Adrenal gland (tissue), 19 donors: ENCODE measurements at regions of chr21 and their contacts with region 1.

Region 1: DNA sequence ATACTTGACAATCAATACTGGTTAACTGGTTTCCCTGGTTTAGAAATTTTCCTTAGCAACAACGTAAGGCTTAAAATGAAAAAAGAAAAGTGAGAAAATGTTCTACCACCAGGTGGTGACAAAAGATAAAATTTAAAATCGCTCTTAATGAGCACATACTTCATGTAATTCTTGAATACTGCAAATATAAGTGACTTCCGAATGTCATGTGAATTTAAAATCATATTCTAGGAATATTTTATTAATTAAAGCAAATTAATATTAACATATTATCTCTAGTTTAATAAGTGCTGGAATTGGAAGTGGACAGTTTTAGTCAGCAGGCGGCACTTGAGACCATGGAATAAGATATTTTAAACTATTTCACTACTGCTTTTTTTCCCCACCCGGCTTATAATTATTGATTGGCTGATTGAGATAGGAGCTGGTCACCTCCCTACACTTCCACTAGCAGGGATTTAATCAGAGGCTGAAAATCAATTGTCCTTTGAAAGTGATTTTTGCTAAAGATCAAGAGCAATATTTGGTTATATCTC is 5.0 kb upstream of the ADAMTS1 start:
- DNase-seq: no peak
- H3K4me3 ChIP-seq: no peak overlapping the region
- H3K27ac ChIP-seq: no peak overlapping the region
- H3K4me1 ChIP-seq: peaks cover 4 to 8% of the 10 kb centered on the region in 2 donors
- H3K27me3 ChIP-seq: peaks cover 4% of the 10 kb centered on the region
- CTCF ChIP-seq: peak; percentile 42 to 95 (median 62)
- POLR2A ChIP-seq: no peak

Region 2: DNA sequence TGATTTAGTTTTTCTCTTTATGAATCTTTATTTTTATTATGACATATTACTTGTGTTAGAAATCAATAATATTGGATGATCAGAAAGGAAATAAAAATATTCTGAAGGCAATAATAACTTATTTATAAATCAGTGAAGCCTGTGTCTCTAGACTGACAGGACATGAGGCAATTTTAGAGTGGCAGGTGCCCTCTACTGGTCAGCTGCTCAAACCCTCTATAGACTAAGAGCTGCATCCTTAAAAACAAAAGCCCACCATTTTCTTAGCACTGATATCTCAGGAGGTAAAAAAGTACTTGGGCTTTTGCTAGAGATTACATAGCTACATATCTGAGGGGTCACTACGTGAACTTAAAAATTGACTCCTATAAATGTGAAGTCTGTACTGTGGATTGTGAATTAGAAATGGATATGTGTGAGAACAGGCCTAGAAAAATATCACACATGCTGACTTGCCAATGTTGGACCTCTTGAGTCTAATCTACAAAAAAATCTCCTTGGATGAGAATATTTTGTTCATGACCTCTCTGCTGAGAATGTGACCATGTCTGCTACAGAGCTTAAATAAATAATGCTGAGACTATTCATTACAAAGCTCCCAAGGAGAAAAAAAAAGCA is 714.6 kb after region 1 on chr21:
- intact Hi-C with region 1: loop called in 1 of 2 experiments (anchors 5 kb)
- DNase-seq: peak; percentile 17 to 80 (median 42)
- H3K4me3 ChIP-seq: no peak overlapping the region
- H3K27ac ChIP-seq: no peak overlapping the region
- H3K4me1 ChIP-seq: no peaks in the 10 kb centered on the region
- H3K27me3 ChIP-seq: no peaks in the 10 kb centered on the region
- CTCF ChIP-seq: peak; percentile 28 to 64 (median 54)
- POLR2A ChIP-seq: no peak

Region 3: DNA sequence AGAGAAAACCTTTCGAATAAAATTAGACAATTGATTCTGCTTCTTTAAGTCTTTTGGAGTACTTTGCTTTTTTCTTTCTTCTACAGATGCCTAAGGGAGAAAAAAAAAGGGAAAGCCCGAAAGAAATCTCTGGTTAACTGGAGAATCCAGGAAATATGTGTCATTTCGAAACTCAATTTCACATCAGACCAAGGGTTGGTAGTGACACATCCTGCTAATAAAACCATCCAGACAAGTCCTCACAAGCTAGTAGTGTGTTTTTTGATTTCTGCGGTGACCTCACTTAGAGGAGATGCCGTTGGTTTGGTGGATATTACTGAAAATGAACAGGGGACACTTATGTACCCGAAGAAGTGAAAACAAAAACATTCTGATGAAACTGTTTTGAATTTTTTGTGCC is 843.2 kb after region 1 on chr21:
- intact Hi-C with region 1: loop called in 1 of 2 experiments (anchors 10 kb)
- DNase-seq: no peak
- H3K4me3 ChIP-seq: no peak overlapping the region
- H3K27ac ChIP-seq: no peak overlapping the region
- H3K4me1 ChIP-seq: no peaks in the 10 kb centered on the region
- H3K27me3 ChIP-seq: no peaks in the 10 kb centered on the region
- CTCF ChIP-seq: no peak
- POLR2A ChIP-seq: no peak

Region 4: DNA sequence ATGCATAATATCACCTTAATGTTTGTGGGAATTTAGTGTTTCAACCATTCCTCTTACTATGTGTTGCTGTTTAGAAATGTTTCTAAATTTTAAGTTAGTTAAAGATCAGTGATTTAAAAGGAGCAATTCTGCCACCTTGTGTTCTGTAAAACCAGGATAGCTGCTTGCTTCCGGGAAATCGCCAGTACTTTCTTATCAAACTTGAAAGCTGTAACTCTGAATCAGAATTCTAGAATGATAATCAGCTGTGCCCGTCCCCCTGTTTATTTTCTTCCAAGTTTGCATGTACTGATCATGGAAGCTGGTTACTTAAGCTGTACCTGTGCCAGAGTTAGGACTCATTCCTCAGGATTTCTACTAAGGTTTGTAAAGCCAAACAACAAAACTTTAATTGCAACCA is 1486.1 kb after region 1 on chr21:
- intact Hi-C with region 1: loop called in 1 of 2 experiments (anchors 10 kb)
- DNase-seq: peak in 3 of 7 donors; percentile 3 to 22 (median 16)
- H3K4me3 ChIP-seq: no peak overlapping the region
- H3K27ac ChIP-seq: no peak overlapping the region
- H3K4me1 ChIP-seq: peaks cover 0 to 4% of the 10 kb centered on the region in 2 donors
- H3K27me3 ChIP-seq: no peaks in the 10 kb centered on the region
- CTCF ChIP-seq: peak in 5 of 6 experiments; percentile 23 to 53 (median 33)
- POLR2A ChIP-seq: no peak

Region 5: GRCh38 chr21:28745131-28746016 is 1895.2 kb after region 1 on chr21:
- intact Hi-C with region 1: loop called in 1 of 2 experiments (anchors 10 kb)
- DNase-seq: peak; percentile 67 to 90 (median 72)
- H3K4me3 ChIP-seq: peak overlapping the region in 2 of 4 donors; percentile 34 to 58
- H3K27ac ChIP-seq: peak overlapping the region in 2 of 5 donors; percentile 35 to 39
- H3K4me1 ChIP-seq: peaks cover 0 to 8% of the 10 kb centered on the region in 2 donors
- H3K27me3 ChIP-seq: no peaks in the 10 kb centered on the region
- CTCF ChIP-seq: peak; percentile 83 to 100 (median 98)
- POLR2A ChIP-seq: no peak